MCF 10A (cell line): ENCODE measurements at regions of chr1 and their contacts with region 1.

Region 1: GRCh38 chr1:201042779-201043461 is 19.4 kb upstream of the KIF21B start:
- DNase-seq: peak; percentile 89
- H3K4me3 Mint-ChIP-seq: no peak overlapping the region
- H3K27ac Mint-ChIP-seq: no peak overlapping the region
- H3K4me1 Mint-ChIP-seq: no peaks in the 10 kb centered on the region
- H3K27me3 Mint-ChIP-seq: peaks cover 33% of the 10 kb centered on the region
- CTCF ChIP-seq: peak; percentile 98

Region 2: GRCh38 chr1:200558866-200559459 is 484.0 kb before region 1 on chr1:
- CTCF ChIA-PET with region 1: interaction called, 61 read pairs
- POLR2A ChIA-PET with region 1: no interaction called
- intact Hi-C with region 1: loop called (anchors 1 kb)
- DNase-seq: peak; percentile 62
- H3K4me3 Mint-ChIP-seq: no peak overlapping the region
- H3K27ac Mint-ChIP-seq: peak overlapping the region; percentile 28
- H3K4me1 Mint-ChIP-seq: peaks cover 6% of the 10 kb centered on the region
- H3K27me3 Mint-ChIP-seq: no peaks in the 10 kb centered on the region
- CTCF ChIP-seq: peak; percentile 81

Region 3: GRCh38 chr1:200845360-200845759 is 197.6 kb before region 1 on chr1:
- CTCF ChIA-PET with region 1: interaction called, 10 read pairs
- POLR2A ChIA-PET with region 1: interaction called, 3 read pairs
- intact Hi-C with region 1: no loop called
- DNase-seq: no peak
- H3K4me3 Mint-ChIP-seq: no peak overlapping the region
- H3K27ac Mint-ChIP-seq: no peak overlapping the region
- H3K4me1 Mint-ChIP-seq: peaks cover 8% of the 10 kb centered on the region
- H3K27me3 Mint-ChIP-seq: no peaks in the 10 kb centered on the region
- CTCF ChIP-seq: no peak

Region 4: GRCh38 chr1:200896531-200897196 is 146.3 kb before region 1 on chr1:
- CTCF ChIA-PET with region 1: interaction called, 17 read pairs
- POLR2A ChIA-PET with region 1: interaction called, 7 read pairs
- intact Hi-C with region 1: loop called (anchors 2 kb)
- DNase-seq: peak; percentile 99
- H3K4me3 Mint-ChIP-seq: peak overlapping the region; percentile 92
- H3K27ac Mint-ChIP-seq: peak overlapping the region; percentile 89
- H3K4me1 Mint-ChIP-seq: peaks cover 62% of the 10 kb centered on the region
- H3K27me3 Mint-ChIP-seq: no peaks in the 10 kb centered on the region
- CTCF ChIP-seq: no peak

Region 5: DNA sequence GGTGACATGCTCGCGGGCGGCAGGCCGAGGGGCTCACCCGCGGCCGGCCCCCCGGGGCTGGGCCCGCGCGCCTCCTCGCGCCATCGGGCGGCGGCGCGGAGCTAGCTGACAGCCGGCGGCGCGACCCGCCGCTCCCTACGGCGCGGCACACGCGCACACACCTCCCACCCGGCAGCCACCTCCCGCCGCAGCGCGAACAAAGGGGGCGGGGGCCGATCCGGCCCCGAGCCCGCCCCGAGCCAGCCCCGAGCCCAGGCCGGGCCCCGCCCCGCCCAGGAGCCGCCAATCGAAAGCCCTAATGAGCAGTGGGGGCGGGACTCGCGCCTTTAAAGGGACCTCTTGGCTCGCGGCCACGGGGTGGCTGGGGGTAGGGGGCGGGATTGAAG is 19.4 kb before region 1 on chr1 and contains the start of gene KIF21B:
- CTCF ChIA-PET with region 1: interaction called, 32 read pairs
- POLR2A ChIA-PET with region 1: interaction called, 3 read pairs
- intact Hi-C with region 1: no loop called
- DNase-seq: peak; percentile 90
- H3K4me3 Mint-ChIP-seq: peak within 1 kb of the TSS; percentile 43
- H3K27ac Mint-ChIP-seq: no peak within 1 kb of the TSS
- H3K4me1 Mint-ChIP-seq: peaks cover 22% of the 10 kb centered on the region
- H3K27me3 Mint-ChIP-seq: no peaks in the 10 kb centered on the region
- CTCF ChIP-seq: no peak
- total RNA-seq, gene KIF21B: 9.5 and 12.7 TPM in 2 replicates